Mammary epithelial cell (primary cell): ENCODE measurements at regions of chr14 and their contacts with region 1.

Region 1: GRCh38 chr14:69354383-69355153 is 43.5 kb downstream of the ERH start:
- DNase-seq: peak; percentile 64
- H3K4me3 ChIP-seq: no peak overlapping the region
- H3K27ac ChIP-seq: no peak overlapping the region
- H3K4me1 ChIP-seq: no peaks in the 10 kb centered on the region
- H3K27me3 ChIP-seq: no peaks in the 10 kb centered on the region
- CTCF ChIP-seq: no peak

Region 2: DNA sequence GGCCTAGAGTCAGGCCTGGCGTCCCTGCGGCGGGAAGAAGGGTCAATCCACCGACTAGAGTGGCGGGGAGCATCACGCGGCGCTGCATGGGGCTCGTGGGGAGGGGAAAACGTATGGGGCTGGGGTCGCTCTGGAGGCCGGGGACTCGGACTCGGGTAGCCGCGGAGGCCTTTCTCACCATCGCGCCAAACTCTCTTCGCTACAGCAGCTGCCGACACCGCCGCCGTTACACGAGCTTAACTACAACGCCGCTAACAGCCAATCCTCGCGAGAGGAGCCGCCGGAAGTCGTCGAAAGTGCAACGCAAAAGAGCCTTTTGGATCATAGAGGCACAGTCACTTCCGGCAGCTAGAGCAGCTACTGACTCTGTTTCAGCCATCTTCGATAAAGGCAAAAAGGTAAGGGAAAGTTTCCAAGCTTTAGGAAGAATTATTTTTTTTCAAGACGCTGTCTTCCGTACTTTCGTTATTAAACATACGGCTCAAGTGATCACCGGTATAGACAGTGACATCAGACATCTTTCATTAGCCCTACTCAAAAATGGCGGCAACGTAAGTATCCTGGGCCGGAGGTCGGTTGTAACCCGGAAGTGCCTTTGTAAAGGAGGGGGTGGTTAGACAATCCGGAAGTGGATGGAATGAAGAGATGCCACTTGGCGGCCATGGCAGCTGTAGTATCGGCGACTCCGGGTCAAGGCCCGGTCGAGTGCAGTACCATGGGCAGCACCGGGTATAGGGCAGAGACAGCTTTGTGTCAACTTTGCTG is 43.7 kb after region 1 on chr14 and contains the starts of genes ERH and SLC39A9:
- CTCF ChIA-PET with region 1: no interaction called
- dilution Hi-C with region 1: loop called (anchors 5 kb)
- in situ Hi-C with region 1: no loop called
- intact Hi-C with region 1: no loop called
- DNase-seq: peak; percentile 96
- H3K4me3 ChIP-seq: peak within 1 kb of the TSS; percentile 56 to 95 (median 75)
- H3K27ac ChIP-seq: peak within 1 kb of the TSS; percentile 92
- H3K4me1 ChIP-seq: peaks cover 21% of the 10 kb centered on the region
- H3K27me3 ChIP-seq: no peaks in the 10 kb centered on the region
- CTCF ChIP-seq: no peak
- total RNA-seq, gene ERH: 53.8 to 190 TPM
- total RNA-seq, gene SLC39A9: 61.5 to 157 TPM

Region 3: GRCh38 chr14:69424149-69424923 is 69.8 kb after region 1 on chr14:
- CTCF ChIA-PET with region 1: no interaction called
- dilution Hi-C with region 1: loop called (anchors 5 kb)
- in situ Hi-C with region 1: no loop called
- intact Hi-C with region 1: no loop called
- DNase-seq: peak; percentile 4
- H3K4me3 ChIP-seq: no peak overlapping the region
- H3K27ac ChIP-seq: no peak overlapping the region
- H3K4me1 ChIP-seq: peaks cover 6% of the 10 kb centered on the region
- H3K27me3 ChIP-seq: no peaks in the 10 kb centered on the region
- CTCF ChIP-seq: no peak